Posterior cingulate gyrus (tissue), 11 donors: ENCODE measurements at regions of chr4 and their contacts with region 1.

Region 1: DNA sequence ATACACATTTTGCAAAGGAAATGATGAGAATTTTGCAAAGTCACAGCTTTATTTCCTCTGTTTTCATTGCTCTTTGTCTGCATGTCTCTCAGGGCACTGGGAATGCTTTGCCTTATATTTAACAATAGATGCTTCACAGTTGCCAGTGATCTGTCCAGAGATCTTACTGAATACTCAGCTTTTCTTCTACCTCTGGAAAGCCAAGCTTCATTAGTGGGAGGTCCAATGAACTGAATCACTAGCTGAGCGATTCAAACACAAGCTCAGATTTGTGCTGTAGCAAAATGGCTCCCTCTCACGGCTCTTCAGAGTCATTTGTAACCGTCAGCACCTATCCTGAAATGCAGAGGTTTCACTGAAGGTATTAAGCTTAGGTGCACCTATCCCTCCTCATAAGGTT is 138.9 kb downstream of the DCLK2 start:
- DNase-seq: peak in 2 of 10 donors; percentile 27 to 36

Region 2: GRCh38 chr4:150078637-150079581 is 138.3 kb before region 1 on chr4:
- intact Hi-C with region 1: loop called (anchors 5 kb)
- DNase-seq: peak in 9 of 10 donors; percentile 18 to 88 (median 45)

Region 3: GRCh38 chr4:150150629-150151062 is 66.5 kb before region 1 on chr4:
- intact Hi-C with region 1: loop called (anchors 2 kb)
- DNase-seq: peak in 8 of 10 donors; percentile 14 to 84 (median 46)